Posterior cingulate gyrus (tissue), 11 donors: ENCODE measurements at regions of chr9 and their contacts with region 1.

Region 1: GRCh38 chr9:133701862-133702797 is 36.0 kb downstream of the SARDH start:
- DNase-seq: peak in 9 of 10 donors; percentile 26 to 88 (median 40)

Region 2: DNA sequence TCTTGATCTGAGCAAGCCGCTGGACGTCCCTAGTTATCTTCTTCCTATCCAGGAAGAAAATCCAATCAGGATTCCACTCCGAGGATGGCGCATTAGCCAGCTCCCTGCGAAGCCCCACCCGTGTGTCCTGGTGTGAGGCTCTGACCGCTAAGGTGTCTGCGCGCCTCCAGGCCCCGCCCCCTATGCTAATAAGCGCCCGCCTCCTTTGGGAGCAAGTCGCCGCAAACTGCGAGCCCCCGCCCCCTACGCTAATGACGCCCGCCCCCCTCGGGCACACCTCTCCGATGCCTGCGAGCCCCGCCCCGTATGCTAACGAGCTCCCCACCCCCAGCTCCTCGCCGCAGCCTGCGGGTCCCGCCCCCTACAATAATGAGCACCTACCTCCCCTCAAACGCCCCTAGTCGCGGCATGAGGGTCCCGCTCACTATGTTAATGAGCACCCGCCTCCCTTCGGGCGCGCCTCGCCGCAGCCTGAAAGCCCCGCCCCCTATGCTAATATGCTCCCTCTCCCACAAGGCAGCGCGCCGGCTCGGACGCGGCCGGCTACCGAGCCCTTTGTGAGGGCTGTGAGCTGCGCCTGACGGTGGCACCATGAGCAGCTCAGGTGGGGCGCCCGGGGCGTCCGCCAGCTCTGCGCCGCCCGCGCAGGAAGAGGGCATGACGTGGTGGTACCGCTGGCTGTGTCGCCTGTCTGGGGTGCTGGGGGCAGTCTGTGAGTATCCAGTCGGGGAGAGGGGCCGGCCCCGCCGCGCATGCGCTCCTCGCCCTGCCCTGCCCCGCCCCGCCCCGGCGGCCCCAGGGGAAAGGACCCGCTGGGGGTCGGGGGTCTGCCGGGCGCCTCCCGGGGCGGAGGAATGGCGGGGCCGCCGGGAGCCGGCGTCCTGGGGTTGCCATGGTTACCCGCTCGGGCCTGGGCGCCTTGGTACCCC is 242.4 kb before region 1 on chr9 and contains the start of gene CACFD1:
- intact Hi-C with region 1: no loop called
- DNase-seq: peak; percentile 93 to 99 (median 96)

Region 3: DNA sequence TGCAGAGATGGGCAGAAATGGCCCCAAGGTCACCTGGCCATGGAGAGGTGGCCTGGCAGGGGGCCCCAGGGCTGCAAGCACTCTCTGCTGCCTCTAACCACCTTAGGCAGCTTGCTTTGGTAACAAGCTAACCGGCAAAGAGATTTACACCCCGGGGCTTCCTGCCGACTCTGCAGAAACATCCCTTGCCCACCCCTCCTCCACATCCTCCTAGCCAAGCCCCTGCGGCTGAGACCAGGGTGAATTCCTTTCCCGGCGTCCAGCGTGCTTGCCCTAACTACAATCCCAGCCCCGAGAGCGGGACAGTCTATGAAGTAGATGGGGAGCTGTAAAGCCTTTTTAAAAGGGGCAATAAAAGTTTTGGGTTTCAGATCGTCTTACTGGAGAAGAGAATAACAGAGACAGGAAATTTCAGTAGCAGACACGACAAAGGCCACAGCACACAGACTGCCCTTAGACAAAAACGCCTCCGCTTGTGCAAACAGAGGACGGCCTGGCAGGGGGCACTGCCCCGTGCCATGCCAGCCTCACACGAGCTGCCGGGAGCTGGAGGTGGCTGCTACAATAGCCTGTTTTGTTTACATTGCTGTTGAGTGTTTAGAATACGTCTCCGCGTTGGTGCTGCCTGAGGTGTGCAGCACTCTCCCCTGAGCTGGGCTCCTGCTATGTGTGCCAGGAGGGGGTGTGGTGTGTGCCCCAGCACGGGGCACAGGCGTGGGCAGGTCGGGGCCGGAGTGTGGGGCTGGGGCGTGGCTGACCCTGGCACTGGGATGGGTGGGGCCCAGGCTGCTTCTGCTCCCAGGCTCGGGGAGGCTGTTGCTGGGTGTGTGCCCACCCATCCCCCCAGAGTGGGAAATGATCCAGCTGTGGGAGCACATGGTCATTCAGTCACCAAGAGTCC is 192.7 kb before region 1 on chr9:
- intact Hi-C with region 1: no loop called
- DNase-seq: peak in 5 of 10 donors; percentile 26 to 89 (median 59)

Region 4: DNA sequence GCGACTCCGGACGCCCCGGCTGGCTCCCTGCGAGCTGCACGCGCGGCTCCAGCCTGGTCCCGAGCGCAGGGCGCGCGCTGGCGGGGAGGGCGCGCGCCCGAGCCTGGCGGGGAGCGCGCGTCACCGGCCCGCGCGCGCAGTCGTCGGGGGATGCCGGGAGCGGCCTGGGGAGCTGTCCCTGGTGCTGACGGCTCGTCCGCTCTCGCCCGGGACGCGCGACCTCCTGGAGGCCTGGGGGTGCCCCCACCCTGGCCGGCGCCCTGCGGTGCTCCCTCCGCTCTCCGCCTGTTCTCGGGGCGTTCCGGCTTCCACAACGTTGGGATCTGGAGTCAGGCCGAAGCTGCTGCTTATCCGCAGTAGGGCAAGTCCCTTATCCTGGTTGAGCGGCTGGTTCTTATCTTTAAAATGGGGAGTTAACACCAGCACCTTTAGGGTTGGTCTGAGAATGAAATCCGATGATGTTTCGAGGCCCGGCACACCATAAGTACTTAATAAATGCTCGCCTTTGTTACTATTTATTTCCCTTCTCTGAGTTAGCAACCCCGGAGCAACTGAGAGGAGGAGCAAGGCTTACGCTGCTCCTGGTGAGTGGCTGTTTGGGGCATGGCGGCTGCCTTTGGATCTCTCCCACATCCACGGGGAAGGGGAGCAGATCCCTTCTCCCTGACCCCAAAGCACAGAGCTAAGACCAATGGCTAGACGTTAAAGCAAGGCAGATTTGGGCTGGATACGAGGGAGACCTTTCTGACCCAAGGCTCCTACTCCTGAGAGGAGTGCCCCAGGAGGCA is 92.6 kb before region 1 on chr9 and contains the start of gene FAM163B:
- intact Hi-C with region 1: loop called (anchors 5 kb)
- DNase-seq: peak in 8 of 10 donors; percentile 29 to 93 (median 54)